ENCODE measurements at regions of chr14 and their contacts with region 1.

Region 1: DNA sequence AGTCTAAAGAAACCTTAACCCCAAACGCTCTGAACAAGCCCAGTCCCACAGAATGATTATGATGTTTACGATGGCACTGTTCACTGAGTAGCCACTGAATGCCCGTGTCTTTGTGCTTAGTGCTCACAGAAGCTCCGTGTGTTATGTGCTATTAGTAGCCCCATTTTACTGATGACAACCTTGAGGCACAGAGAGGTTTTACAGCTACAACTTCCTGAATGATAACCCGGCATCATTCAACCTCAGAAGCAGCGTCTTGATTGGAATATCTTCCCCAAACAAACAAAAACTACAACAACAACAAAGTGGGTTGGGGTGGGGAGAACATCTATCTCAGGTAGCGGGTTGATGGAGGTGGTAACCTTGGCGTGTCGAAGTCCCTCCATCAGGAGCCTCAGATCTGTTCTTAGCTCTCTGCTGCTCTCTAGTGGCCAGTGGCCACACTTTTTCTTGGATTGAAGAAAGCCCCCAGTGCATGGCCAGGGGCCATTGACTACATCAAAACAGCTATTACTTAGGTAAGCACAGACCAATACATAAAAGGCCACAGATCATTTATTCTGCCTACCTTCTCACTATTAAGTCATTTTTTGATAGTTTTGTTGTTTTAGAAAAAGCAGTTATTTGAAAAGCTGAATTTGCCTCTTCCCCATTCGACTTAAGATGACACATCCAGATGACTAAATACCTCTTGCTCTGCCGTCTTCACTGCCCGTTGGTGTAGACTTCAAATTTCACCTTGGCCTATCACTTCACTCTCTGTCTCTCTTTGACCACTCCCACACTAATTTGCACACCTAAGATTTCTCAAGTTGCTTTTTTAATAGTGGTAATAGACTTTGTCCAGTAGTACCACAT is 376.9 kb downstream of the GALC start:
- DNase-seq: peak; percentile 36 to 83
- H3K4me3 ChIP-seq: no peak overlapping the region
- H3K27ac ChIP-seq: no peak overlapping the region
- H3K4me1 ChIP-seq: no peaks in the 10 kb centered on the region
- H3K27me3 ChIP-seq: peaks cover 0 to 1% (median 0%) of the 10 kb centered on the region in 4 experiments; a peak in 1 of 7 replicates
- CTCF ChIP-seq: peak; percentile 51 to 79 (median 76)
- EP300 ChIP-seq: no peak
- POLR2A ChIP-seq: no peak
- RAD21 ChIP-seq: peak; percentile 92 to 94

Region 2: GRCh38 chr14:87113286-87113685 is 502.8 kb before region 1 on chr14:
- CTCF ChIA-PET with region 1: interaction called, 10 read pairs
- POLR2A ChIA-PET with region 1: no interaction called
- DNase-seq: no peak
- H3K4me3 ChIP-seq: no peak overlapping the region
- H3K27ac ChIP-seq: no peak overlapping the region
- H3K4me1 ChIP-seq: no peaks in the 10 kb centered on the region; a peak in 1 of 7 replicates
- H3K27me3 ChIP-seq: no peaks in the 10 kb centered on the region
- CTCF ChIP-seq: peak in 2 of 3 experiments; percentile 17 to 28; a peak in 2 of 4 replicates
- EP300 ChIP-seq: no peak
- POLR2A ChIP-seq: no peak
- RAD21 ChIP-seq: peak; percentile 16 to 43; a peak in 3 of 4 replicates

Region 3: DNA sequence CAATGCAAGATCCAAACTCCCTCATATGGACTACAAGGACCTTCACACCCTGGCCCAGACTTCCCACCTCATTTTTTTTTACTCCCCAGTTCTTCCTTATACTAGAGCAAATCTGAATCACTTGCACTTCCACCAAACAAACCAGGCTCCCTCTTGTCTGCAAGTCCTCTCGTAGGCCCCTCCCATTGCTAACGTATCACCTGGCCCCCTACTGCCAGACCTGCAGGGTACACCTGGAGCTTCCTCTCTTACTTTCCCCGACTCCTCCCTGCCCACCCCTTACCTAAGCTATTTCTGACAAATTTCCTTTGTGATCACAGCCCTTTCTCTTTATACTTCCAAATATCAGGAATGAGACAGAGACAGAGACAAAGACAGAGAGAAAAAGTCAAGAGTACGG is 87.0 kb before region 1 on chr14:
- CTCF ChIA-PET with region 1: interaction called, 14 read pairs
- POLR2A ChIA-PET with region 1: no interaction called
- DNase-seq: no peak
- H3K4me3 ChIP-seq: no peak overlapping the region
- H3K27ac ChIP-seq: no peak overlapping the region
- H3K4me1 ChIP-seq: no peaks in the 10 kb centered on the region; a peak in 1 of 7 replicates
- H3K27me3 ChIP-seq: no peaks in the 10 kb centered on the region
- CTCF ChIP-seq: peak in 2 of 3 experiments; percentile 9 to 23; a peak in 2 of 4 replicates
- EP300 ChIP-seq: no peak
- POLR2A ChIP-seq: no peak
- RAD21 ChIP-seq: no peak